Endothelial cell of umbilical vein (primary cell): ENCODE measurements at regions of chr15 and their contacts with region 1.

Region 1: GRCh38 chr15:85592148-85592547 is 202.6 kb downstream of the KLHL25 start:
- DNase-seq: peak; percentile 93
- H3K4me3 ChIP-seq: no peak overlapping the region
- H3K27ac ChIP-seq: peak overlapping the region; percentile 60
- H3K4me1 ChIP-seq: peaks cover 11% of the 10 kb centered on the region
- H3K27me3 ChIP-seq: no peaks in the 10 kb centered on the region
- CTCF ChIP-seq: peak in 1 of 2 donors; percentile 23
- POLR2A ChIP-seq: no peak

Region 2: GRCh38 chr15:85607842-85608241 is 15.7 kb after region 1 on chr15:
- CTCF ChIA-PET with region 1: interaction called, 23 read pairs
- POLR2A ChIA-PET with region 1: no interaction called
- dilution Hi-C with region 1: no loop called
- intact Hi-C with region 1: no loop called
- DNase-seq: peak; percentile 92
- H3K4me3 ChIP-seq: peak overlapping the region in 2 of 3 experiments; percentile 28 to 55
- H3K27ac ChIP-seq: peak overlapping the region; percentile 98
- H3K4me1 ChIP-seq: peaks cover 28% of the 10 kb centered on the region
- H3K27me3 ChIP-seq: no peaks in the 10 kb centered on the region
- CTCF ChIP-seq: no peak
- POLR2A ChIP-seq: no peak

Region 3: DNA sequence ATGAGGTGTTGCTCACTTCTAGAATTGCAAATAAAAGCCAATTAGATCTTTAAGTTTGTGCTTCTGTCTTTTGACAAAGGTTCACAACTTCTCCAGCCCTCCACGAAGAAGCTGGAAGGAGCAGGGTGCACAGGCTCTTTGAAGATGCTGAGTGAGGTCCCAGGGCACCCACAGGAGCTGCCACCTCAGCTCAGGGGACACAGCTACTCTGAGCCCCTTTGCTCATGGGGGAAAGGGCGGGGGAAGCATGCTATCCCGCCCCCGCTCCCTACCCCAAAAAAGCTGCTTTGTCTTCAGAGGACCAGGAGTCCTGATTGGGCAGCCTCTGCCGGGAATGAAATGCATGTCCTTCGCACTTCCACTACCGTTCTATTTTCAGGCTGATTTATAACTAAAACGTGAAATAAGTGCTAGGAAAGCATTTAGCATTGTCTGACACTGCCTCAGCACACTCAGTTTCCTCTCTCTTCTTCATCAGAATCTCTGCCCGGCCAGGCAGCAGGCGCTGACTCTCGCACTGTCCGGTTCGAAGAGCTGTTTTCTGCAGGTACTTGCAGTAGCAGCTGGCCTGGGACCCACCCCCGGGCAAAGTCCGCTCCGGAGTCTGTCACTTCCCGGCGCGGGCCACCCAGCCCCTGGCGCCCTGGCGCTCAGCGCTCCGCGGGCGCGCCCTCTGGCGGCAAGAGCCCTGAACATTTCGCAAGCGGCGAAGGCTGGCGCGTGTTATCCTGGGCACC is 248.1 kb after region 1 on chr15:
- CTCF ChIA-PET with region 1: interaction called, 3 read pairs
- POLR2A ChIA-PET with region 1: no interaction called
- dilution Hi-C with region 1: no loop called
- intact Hi-C with region 1: loop called (anchors 2 kb)
- DNase-seq: peak; percentile 75
- H3K4me3 ChIP-seq: peak overlapping the region in 2 of 3 experiments; percentile 3 to 9
- H3K27ac ChIP-seq: no peak overlapping the region
- H3K4me1 ChIP-seq: peaks cover 2% of the 10 kb centered on the region
- H3K27me3 ChIP-seq: peaks cover 0 to 4% of the 10 kb centered on the region in 2 experiments
- CTCF ChIP-seq: peak; percentile 94 to 98
- POLR2A ChIP-seq: no peak